Stomach (tissue), 19 donors: ENCODE measurements at regions of chr17 and their contacts with region 1.

Region 1: GRCh38 chr17:54439816-54440215 is 460.8 kb upstream of the TOM1L1 start:
- DNase-seq: no peak
- H3K4me3 ChIP-seq: no peak overlapping the region
- H3K27ac ChIP-seq: no peak overlapping the region
- H3K4me1 ChIP-seq: no peaks in the 10 kb centered on the region
- H3K27me3 ChIP-seq: no peaks in the 10 kb centered on the region
- CTCF ChIP-seq: no peak
- EP300 ChIP-seq: no peak
- POLR2A ChIP-seq: no peak

Region 2: DNA sequence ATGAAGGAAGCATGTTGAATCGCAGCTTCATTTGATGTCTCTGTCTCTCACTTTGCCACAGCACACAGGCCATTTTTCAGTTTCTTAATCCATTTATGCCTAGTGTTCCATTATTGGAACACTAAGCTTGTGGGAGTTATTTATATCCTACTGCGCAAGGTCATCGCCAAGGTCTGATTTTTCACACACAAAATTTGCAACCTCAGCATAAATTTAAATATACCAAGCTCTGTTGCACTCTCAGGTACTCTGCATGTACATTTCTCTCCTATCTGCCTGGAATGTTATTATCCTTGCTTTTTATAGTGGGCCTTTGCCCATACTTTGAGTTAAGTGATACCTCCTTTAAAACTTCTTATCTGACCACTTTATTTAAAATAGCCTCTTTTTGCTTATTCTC is 58.3 kb before region 1 on chr17:
- intact Hi-C with region 1: loop called (anchors 10 kb)
- DNase-seq: no peak
- H3K4me3 ChIP-seq: no peak overlapping the region
- H3K27ac ChIP-seq: no peak overlapping the region
- H3K4me1 ChIP-seq: no peaks in the 10 kb centered on the region
- H3K27me3 ChIP-seq: no peaks in the 10 kb centered on the region
- CTCF ChIP-seq: no peak
- EP300 ChIP-seq: no peak
- POLR2A ChIP-seq: no peak

Region 3: DNA sequence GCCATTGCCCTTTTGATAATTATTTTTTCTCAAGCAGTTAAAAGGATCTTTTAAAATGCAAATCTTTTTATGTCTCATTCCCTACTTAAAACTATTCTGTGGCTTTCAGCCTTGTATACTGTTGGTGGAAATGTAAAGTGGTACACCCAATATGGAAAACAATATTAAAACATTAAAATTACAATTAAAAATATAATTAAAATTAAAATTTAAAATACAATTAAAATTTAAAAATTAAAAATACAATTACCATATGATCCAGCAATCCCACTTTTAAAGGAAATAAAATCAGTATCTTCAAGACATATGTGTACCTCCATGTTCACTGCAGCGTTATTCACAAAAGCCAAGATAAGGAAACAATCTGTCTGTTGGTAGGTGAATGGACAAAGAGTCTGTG is 120.1 kb after region 1 on chr17:
- intact Hi-C with region 1: no loop called
- DNase-seq: no peak
- H3K4me3 ChIP-seq: no peak overlapping the region
- H3K27ac ChIP-seq: no peak overlapping the region
- H3K4me1 ChIP-seq: no peaks in the 10 kb centered on the region
- H3K27me3 ChIP-seq: no peaks in the 10 kb centered on the region
- CTCF ChIP-seq: no peak
- EP300 ChIP-seq: no peak
- POLR2A ChIP-seq: no peak